Transverse colon (tissue), 4 donors: ENCODE measurements at regions of chr5 and their contacts with region 1.

Region 1: DNA sequence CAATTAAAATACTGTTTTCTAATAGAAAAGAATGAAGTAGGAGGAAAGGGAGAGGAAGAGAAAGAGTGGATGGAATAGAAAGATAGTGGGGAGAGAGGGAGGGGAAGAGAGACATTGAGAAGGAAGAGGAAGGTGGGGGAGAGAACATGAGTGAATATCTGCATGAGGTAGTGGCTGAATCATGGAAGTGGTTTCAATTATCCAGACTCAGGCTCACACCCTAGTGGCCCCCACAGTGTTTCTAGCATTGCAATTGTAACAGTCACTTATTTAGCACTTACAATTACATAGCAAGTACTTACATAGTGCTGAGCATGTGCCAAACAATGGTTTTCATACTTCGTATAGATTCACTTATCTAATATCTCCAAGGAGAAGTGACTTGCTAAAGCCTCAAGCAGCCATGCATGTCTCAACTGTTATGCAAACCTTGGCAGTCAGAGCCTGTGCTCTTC is 72.7 kb downstream of the CAST start:
- DNase-seq: no peak
- H3K4me3 ChIP-seq: no peak overlapping the region
- H3K27ac ChIP-seq: no peak overlapping the region
- H3K4me1 ChIP-seq: no peaks in the 10 kb centered on the region
- H3K27me3 ChIP-seq: no peaks in the 10 kb centered on the region
- CTCF ChIP-seq: no peak
- EP300 ChIP-seq: no peak
- POLR2A ChIP-seq: no peak

Region 2: GRCh38 chr5:96614110-96614691 is 120.7 kb before region 1 on chr5:
- in situ Hi-C with region 1: no loop called
- intact Hi-C with region 1: loop called (anchors 10 kb)
- DNase-seq: peak; percentile 60
- H3K4me3 ChIP-seq: no peak overlapping the region
- H3K27ac ChIP-seq: peak overlapping the region; percentile 10 to 59 (median 50)
- H3K4me1 ChIP-seq: peaks cover 0 to 19% (median 9%) of the 10 kb centered on the region in 4 donors
- H3K27me3 ChIP-seq: no peaks in the 10 kb centered on the region
- CTCF ChIP-seq: peak; percentile 51 to 79 (median 55)
- EP300 ChIP-seq: no peak
- POLR2A ChIP-seq: no peak